Activated CD4-positive, alpha-beta memory T cell treated with anti-CD3 and anti-CD28 coated beads, Interleukin-2, amount 10 ng/mL, durations not matched to agents 7 days and 5 days (primary cell): ENCODE measurements at regions of chr3 and their contacts with region 1.

Region 1: DNA sequence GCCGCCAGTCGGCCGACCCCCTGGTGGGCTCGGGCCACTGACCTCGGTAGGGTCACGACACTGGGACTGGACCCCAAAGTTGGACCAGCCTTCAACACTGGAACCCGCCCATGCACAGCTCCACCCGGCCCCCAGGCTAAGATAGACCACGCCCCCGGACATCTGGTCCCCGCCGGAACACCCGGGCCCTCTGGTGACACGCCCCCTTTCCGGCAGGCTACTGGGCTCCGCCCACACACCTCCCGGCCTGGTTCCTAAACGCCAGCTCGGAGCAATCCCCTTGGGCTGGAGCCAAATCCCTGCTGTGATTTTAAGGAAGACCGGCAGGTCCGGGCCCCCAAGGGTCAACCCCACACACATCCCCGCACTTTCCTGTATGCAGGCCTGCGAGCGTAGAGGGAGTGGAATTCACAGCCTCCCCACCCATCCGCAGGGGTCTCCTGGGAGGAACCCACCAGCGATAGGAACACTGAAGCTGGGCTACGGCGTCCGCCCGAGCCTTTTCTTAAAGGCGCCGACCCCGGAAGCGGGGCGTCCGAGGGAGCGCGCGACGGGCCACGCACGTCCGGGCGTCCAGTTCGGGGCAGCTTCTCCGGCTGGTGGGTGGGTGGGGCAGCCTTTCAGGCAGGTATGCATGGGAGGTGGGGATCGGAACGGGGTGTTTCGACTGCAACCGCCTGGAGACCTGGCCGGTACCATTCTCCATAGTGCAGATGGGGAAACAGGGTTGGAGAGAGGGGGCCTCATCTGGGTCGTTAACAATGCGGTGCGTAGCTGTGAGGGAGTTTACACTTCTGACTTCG is at the start of gene HEMK1:
- DNase-seq: peak; percentile 95
- H3K4me3 Mint-ChIP-seq: peak within 1 kb of the TSS; percentile 98
- H3K27ac Mint-ChIP-seq: peak within 1 kb of the TSS; percentile 97
- H3K4me1 Mint-ChIP-seq: peaks cover 68% of the 10 kb centered on the region
- H3K27me3 Mint-ChIP-seq: no peaks in the 10 kb centered on the region
- total RNA-seq, gene HEMK1: 49.6 to 50.1 TPM

Region 2: GRCh38 chr3:50337191-50337841 is 231.8 kb before region 1 on chr3:
- CTCF ChIA-PET with region 1: interaction called, 3 read pairs
- POLR2A ChIA-PET with region 1: interaction called, 142 read pairs
- DNase-seq: peak; percentile 97
- H3K4me3 Mint-ChIP-seq: peak overlapping the region; percentile 85
- H3K27ac Mint-ChIP-seq: peak overlapping the region; percentile 94
- H3K4me1 Mint-ChIP-seq: peaks cover 63% of the 10 kb centered on the region
- H3K27me3 Mint-ChIP-seq: no peaks in the 10 kb centered on the region

Region 3: GRCh38 chr3:50542177-50543034 is 26.7 kb before region 1 on chr3:
- CTCF ChIA-PET with region 1: interaction called, 12 read pairs
- POLR2A ChIA-PET with region 1: interaction called, 3 read pairs
- DNase-seq: peak; percentile 67
- H3K4me3 Mint-ChIP-seq: no peak overlapping the region
- H3K27ac Mint-ChIP-seq: no peak overlapping the region
- H3K4me1 Mint-ChIP-seq: no peaks in the 10 kb centered on the region
- H3K27me3 Mint-ChIP-seq: peaks cover 20% of the 10 kb centered on the region

Region 4: DNA sequence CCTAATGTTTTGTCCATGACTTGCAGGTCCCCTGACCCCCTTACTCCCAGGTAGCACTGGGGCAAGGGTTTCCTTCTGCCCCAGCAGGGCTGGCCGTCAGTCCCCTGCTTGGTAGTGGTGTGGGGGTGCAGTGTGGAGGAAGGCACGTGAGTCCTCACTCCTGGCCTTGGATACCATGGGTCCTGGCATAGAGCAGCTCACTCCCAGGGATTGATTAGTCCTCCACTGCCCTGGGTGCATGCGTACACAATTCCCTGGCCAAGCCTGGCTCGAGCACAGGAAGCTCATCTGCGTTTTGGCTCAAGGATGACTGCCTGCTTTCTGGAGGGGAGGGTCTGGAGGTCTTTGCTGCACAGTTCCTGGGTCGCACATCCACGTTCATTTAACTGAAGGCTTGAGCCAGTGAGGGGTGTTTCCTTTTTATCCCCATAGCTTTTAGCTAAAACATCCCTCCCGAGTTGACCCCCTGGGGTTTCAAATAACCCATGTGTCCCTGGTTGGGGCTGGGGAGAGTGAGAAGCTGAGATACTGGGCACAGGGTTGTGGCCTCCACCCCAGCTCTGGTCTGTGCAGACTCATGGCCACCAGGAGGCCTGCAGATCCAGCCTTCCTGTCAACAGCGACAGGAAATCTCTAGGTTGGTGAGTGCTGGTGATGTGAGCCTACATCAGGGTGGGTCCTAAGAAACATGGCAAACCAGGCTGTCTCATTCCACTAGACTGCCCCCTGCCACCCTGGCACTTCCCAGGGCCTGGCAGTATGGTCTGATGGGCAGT is 11.7 kb after region 1 on chr3:
- CTCF ChIA-PET with region 1: interaction called, 331 read pairs
- POLR2A ChIA-PET with region 1: interaction called, 877 read pairs
- DNase-seq: no peak
- H3K4me3 Mint-ChIP-seq: no peak overlapping the region
- H3K27ac Mint-ChIP-seq: peak overlapping the region; percentile 65
- H3K4me1 Mint-ChIP-seq: peaks cover 42% of the 10 kb centered on the region
- H3K27me3 Mint-ChIP-seq: no peaks in the 10 kb centered on the region

Region 5: DNA sequence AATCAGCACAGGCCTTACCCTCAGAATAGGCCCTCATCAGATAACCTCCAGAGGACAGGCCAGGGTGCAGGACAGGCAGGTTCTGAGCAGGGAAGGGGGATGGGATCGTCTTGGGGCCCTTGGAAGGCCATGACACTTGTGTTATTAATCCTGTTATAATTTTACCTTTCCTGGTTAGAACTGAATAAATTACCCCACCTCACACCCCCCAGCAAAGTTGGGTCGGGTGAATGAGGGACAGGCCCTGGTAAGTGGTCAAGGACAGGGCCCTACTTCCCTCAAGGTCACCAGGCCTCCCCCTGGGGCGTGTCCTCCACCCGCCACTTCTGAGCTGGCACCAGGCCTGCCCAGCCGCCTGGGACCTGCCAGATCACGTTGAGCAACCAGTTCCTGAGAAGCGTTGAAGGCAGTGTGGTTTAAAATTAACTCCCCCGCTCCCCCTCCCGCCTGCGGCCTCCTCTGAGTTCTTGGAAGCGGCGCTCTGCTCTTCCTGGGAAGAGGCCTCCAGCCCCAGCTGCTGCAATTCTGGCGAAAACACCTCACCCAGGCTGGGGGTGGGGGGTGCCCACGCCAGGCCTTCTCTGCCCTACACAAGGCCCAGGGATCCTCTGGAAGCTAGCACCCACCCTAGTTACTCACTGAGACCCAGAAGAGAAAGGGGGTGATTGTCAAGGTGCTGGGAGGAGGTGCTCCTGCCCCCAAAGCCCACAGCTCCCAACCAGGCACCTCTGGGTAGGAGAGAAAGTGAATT is 31.9 kb after region 1 on chr3:
- CTCF ChIA-PET with region 1: interaction called, 854 read pairs
- POLR2A ChIA-PET with region 1: interaction called, 4,963 read pairs
- DNase-seq: peak; percentile 92
- H3K4me3 Mint-ChIP-seq: peak overlapping the region; percentile 71
- H3K27ac Mint-ChIP-seq: peak overlapping the region; percentile 99
- H3K4me1 Mint-ChIP-seq: peaks cover 88% of the 10 kb centered on the region
- H3K27me3 Mint-ChIP-seq: no peaks in the 10 kb centered on the region

Region 6: GRCh38 chr3:51384726-51385473 is 815.8 kb after region 1 on chr3 and contains the start of gene MANF:
- CTCF ChIA-PET with region 1: interaction called, 5 read pairs
- POLR2A ChIA-PET with region 1: interaction called, 50 read pairs
- DNase-seq: peak; percentile 99
- H3K4me3 Mint-ChIP-seq: peak within 1 kb of the TSS; percentile 98
- H3K27ac Mint-ChIP-seq: peak within 1 kb of the TSS; percentile 95
- H3K4me1 Mint-ChIP-seq: peaks cover 51% of the 10 kb centered on the region
- H3K27me3 Mint-ChIP-seq: no peaks in the 10 kb centered on the region
- total RNA-seq, gene MANF: 143 to 149 TPM